ENCODE measurements at regions of chr1 and their contacts with region 1.

Region 1: DNA sequence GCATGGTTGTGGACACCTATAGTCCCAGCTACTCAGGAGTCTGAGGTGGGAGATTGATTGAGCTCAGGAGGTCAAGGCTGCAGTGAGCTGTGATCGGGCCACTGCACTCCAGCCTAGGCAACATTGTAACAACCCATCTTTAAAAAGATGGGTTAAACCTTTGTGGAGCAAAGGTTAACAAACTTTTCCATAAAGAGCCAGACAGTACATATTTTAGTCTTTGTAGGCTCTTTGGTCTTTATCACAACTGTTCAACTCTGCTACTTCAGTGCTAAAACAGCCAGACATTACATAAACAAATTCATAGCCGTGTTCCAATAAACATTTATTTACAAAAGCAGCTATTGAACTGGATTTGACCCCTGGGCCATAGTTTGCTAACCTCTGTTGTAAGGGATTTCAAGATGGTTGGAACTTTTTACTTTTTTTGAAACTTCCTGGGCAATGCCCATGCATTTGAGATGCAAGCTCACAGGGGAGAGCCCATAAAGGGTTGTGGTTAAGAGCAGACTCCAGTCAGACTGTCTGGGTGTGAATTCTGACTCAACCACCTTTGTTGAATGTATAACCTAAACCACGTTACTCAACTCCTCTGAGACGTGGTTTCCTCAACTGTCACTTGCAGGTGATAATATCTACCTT is 10.8 kb downstream of the INAVA start:
- DNase-seq: peak; percentile 68
- H3K4me3 Mint-ChIP-seq: no peak overlapping the region
- H3K27ac Mint-ChIP-seq: no peak overlapping the region
- H3K4me1 Mint-ChIP-seq: peaks cover 15% of the 10 kb centered on the region
- H3K27me3 Mint-ChIP-seq: peaks cover 40% of the 10 kb centered on the region

Region 2: GRCh38 chr1:200877839-200878551 is 27.5 kb before region 1 on chr1:
- CTCF ChIA-PET with region 1: interaction called, 3 read pairs
- POLR2A ChIA-PET with region 1: interaction called, 4 read pairs
- intact Hi-C with region 1: loop called (anchors 1 kb)
- DNase-seq: peak; percentile 89
- H3K4me3 Mint-ChIP-seq: no peak overlapping the region
- H3K27ac Mint-ChIP-seq: no peak overlapping the region
- H3K4me1 Mint-ChIP-seq: peaks cover 56% of the 10 kb centered on the region
- H3K27me3 Mint-ChIP-seq: peaks cover 33% of the 10 kb centered on the region

Region 3: GRCh38 chr1:200925831-200926230 is 20.3 kb after region 1 on chr1:
- CTCF ChIA-PET with region 1: no interaction called
- POLR2A ChIA-PET with region 1: interaction called, 3 read pairs
- intact Hi-C with region 1: loop called (anchors 1 kb)
- DNase-seq: peak; percentile 35
- H3K4me3 Mint-ChIP-seq: no peak overlapping the region
- H3K27ac Mint-ChIP-seq: no peak overlapping the region
- H3K4me1 Mint-ChIP-seq: peaks cover 5% of the 10 kb centered on the region
- H3K27me3 Mint-ChIP-seq: peaks cover 17% of the 10 kb centered on the region